Activated CD4-positive, alpha-beta T cell treated with anti-CD3 and anti-CD28 coated beads, Interleukin-2, amount 10 ng/mL, durations not matched to agents 7 days and 5 days (primary cell): ENCODE measurements at regions of chr6 and their contacts with region 1.

Region 1: GRCh38 chr6:137560184-137560563 is 66.0 kb upstream of the OLIG3 start:
- DNase-seq: no peak
- H3K4me3 Mint-ChIP-seq: peak overlapping the region; percentile 25
- H3K27ac Mint-ChIP-seq: peak overlapping the region; percentile 81
- H3K4me1 Mint-ChIP-seq: peaks cover 38% of the 10 kb centered on the region
- H3K27me3 Mint-ChIP-seq: peaks cover 6% of the 10 kb centered on the region

Region 2: DNA sequence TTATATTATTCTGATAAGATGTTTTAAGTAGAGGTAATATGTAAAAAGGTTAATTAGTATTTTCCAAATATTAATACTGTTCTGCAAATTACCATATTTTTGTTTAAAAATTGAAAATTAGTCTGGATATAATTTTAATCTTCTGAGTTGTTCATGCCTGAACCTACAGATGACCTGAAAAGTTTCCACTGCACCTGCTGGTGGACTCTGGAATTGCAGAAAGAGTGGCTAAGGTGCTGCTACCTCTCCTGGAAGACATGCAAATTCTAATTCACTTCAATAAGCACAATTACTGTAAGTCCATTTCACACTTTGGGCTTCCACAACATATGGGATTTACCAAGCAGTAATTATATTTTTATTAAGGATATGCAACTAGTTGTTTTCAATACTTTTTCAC is 11.7 kb after region 1 on chr6:
- CTCF ChIA-PET with region 1: no interaction called
- POLR2A ChIA-PET with region 1: no interaction called
- DNase-seq: peak; percentile 71
- H3K4me3 Mint-ChIP-seq: no peak overlapping the region
- H3K27ac Mint-ChIP-seq: no peak overlapping the region
- H3K4me1 Mint-ChIP-seq: peaks cover 9% of the 10 kb centered on the region
- H3K27me3 Mint-ChIP-seq: peaks cover 56% of the 10 kb centered on the region

Region 3: GRCh38 chr6:137589067-137589848 is 29.1 kb after region 1 on chr6:
- CTCF ChIA-PET with region 1: interaction called, 10 read pairs
- POLR2A ChIA-PET with region 1: no interaction called
- DNase-seq: peak; percentile 76
- H3K4me3 Mint-ChIP-seq: no peak overlapping the region
- H3K27ac Mint-ChIP-seq: peak overlapping the region; percentile 63
- H3K4me1 Mint-ChIP-seq: peaks cover 14% of the 10 kb centered on the region
- H3K27me3 Mint-ChIP-seq: peaks cover 37% of the 10 kb centered on the region